A673 (cell line): ENCODE measurements at regions of chr1 and their contacts with region 1.

Region 1: DNA sequence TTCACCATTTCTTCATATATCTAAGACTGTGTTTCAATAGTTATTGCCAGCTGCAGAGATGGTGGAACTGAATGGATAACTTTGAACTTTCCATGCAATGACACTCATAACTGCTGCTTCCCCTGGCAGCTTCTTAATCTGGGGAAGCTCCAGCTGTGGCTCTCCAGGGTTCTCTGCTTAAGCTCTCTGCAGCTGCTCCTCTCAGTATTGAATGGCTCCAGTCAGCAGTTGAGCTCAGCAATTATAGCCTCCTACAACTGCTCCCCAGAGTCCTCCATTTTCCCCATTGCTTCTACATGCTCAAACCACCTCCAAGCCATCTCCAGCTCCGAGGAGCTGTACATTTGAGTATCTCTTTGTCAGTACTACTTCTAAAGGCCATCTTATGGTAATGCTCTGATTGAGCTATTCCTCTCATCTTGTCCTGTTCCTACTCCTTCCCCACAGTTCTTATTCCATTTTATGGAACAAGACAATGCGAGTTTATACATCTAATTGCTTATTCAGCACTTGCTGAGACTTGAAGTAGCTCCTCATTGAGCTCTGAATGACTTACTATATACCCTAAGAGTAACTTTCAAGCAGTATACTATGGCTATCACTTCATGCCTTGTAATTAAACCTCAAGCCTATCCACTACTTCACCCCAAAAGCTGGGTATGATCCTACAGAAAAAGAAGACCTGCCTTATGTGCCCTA is 362.4 kb downstream of the NEGR1 start:
- DNase-seq: peak; percentile 97
- H3K4me3 ChIP-seq: no peak overlapping the region
- H3K27ac ChIP-seq: peak overlapping the region; percentile 13
- H3K4me1 ChIP-seq: peaks cover 21% of the 10 kb centered on the region
- H3K27me3 ChIP-seq: no peaks in the 10 kb centered on the region
- CTCF ChIP-seq: no peak

Region 2: GRCh38 chr1:71438626-71439025 is 481.3 kb before region 1 on chr1:
- CTCF ChIA-PET with region 1: no interaction called
- POLR2A ChIA-PET with region 1: no interaction called
- intact Hi-C with region 1: no loop called
- DNase-seq: no peak
- H3K4me3 ChIP-seq: no peak overlapping the region
- H3K27ac ChIP-seq: no peak overlapping the region
- H3K4me1 ChIP-seq: no peaks in the 10 kb centered on the region
- H3K27me3 ChIP-seq: no peaks in the 10 kb centered on the region
- CTCF ChIP-seq: no peak

Region 3: DNA sequence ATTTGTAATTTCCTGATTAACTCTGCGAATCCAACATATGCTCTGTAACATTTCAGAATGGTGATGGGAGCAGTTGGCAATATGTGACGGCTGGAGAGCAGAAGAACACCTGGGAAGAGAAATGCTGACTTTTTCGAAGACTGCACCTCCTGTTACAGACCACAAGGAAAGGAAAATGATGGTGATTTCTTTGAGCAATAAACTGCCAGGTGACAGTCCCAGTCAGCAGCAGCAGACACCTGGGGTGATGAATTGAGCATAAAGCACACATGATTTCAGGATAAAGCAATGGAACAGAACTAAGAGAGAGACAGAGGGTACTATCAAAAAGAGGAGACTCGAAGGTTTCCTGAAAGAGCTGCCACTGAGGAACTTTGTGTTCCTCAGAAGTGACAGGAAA is 166.2 kb before region 1 on chr1:
- CTCF ChIA-PET with region 1: no interaction called
- POLR2A ChIA-PET with region 1: no interaction called
- intact Hi-C with region 1: no loop called
- DNase-seq: no peak
- H3K4me3 ChIP-seq: no peak overlapping the region
- H3K27ac ChIP-seq: no peak overlapping the region
- H3K4me1 ChIP-seq: peaks cover 4% of the 10 kb centered on the region
- H3K27me3 ChIP-seq: no peaks in the 10 kb centered on the region
- CTCF ChIP-seq: no peak

Region 4: DNA sequence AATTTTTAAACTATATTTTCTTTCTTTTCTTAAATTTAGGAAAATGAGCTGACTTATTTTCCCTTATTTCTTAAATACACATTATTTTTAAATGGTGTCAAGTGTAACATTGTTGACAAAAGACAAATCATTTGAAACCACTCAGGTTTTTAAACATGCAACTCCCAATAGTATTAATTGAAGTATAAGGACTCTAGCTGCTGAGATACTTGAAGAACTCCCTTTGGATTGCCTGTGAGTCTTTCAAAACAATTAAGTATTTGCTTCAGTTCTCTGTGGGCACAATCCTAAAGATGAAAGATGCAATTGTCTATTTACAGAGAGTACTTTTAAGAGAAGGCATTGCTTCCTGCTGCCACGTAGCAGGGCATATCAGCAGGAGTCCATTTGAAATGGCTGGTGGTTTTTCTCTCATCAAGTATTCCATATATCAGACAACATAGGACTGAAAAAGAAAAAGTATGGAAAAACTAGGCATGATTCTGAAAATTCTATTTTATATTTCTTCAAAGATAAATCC is 11.0 kb before region 1 on chr1:
- CTCF ChIA-PET with region 1: no interaction called
- POLR2A ChIA-PET with region 1: no interaction called
- intact Hi-C with region 1: loop called (anchors 1 kb)
- DNase-seq: peak; percentile 84
- H3K4me3 ChIP-seq: peak overlapping the region; percentile 6
- H3K27ac ChIP-seq: peak overlapping the region; percentile 34
- H3K4me1 ChIP-seq: peaks cover 20% of the 10 kb centered on the region
- H3K27me3 ChIP-seq: no peaks in the 10 kb centered on the region
- CTCF ChIP-seq: no peak